T-cell (primary cell): ENCODE measurements at regions of chr11 and their contacts with region 1.

Region 1: GRCh38 chr11:104637657-104638170 is 260.5 kb downstream of the CASP12 start:
- DNase-seq: no peak
- ATAC-seq: no peak
- H3K4me3 ChIP-seq: no peak overlapping the region
- H3K4me3 Mint-ChIP-seq: no peak overlapping the region
- H3K27ac ChIP-seq: no peak overlapping the region
- H3K27ac Mint-ChIP-seq: no peak overlapping the region
- H3K4me1 ChIP-seq: no peaks in the 10 kb centered on the region
- H3K4me1 Mint-ChIP-seq: peaks cover 0 to 2% (median 0%) of the 10 kb centered on the region in 3 donors
- H3K27me3 ChIP-seq: no peaks in the 10 kb centered on the region
- H3K27me3 Mint-ChIP-seq: no peaks in the 10 kb centered on the region

Region 2: DNA sequence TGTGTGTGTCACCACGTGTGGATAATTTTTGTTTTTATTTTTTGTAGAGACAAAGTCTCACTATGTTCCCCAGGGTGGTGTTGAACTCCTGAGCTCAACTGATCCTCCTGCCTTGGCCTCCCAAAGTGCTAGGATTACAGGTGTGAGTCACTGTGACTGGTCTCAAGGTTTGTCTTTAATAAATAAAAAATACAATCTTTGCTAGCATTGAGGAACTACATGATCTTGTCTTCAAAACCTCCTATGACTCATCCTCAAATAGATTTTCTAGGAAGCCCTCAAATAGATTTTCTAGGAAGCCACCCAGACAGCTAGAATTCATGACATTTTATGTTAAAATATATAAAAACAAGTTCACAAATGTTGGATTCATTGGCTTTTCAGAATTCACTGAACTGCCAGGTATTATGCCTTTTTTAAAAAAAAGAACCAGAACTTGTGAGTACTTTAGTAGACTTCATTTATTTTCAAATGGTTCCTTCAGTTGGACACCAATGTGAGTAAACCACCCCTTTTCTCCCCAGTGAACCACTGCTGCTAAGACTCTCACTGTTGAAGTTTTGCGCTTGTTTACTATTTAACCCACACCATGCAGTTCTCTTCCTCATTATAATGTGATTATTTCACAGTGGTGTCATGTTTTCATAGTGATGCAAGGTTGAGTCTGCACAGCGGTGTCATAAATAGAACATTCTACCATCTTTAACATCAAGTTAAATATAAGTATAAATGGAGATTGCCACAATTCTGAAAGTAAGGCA is 43.3 kb before region 1 on chr11:
- CTCF ChIA-PET with region 1: no interaction called
- POLR2A ChIA-PET with region 1: no interaction called
- DNase-seq: no peak
- ATAC-seq: peak in 1 of 4 experiments; percentile 35
- H3K4me3 ChIP-seq: no peak overlapping the region
- H3K4me3 Mint-ChIP-seq: no peak overlapping the region
- H3K27ac ChIP-seq: no peak overlapping the region
- H3K27ac Mint-ChIP-seq: peak overlapping the region in 1 of 2 donors; percentile 60
- H3K4me1 ChIP-seq: no peaks in the 10 kb centered on the region
- H3K4me1 Mint-ChIP-seq: peaks cover 0 to 5% (median 4%) of the 10 kb centered on the region in 3 donors
- H3K27me3 ChIP-seq: peaks cover 0 to 2% of the 10 kb centered on the region in 2 experiments
- H3K27me3 Mint-ChIP-seq: peaks cover 0 to 2% of the 10 kb centered on the region in 2 donors

Region 3: DNA sequence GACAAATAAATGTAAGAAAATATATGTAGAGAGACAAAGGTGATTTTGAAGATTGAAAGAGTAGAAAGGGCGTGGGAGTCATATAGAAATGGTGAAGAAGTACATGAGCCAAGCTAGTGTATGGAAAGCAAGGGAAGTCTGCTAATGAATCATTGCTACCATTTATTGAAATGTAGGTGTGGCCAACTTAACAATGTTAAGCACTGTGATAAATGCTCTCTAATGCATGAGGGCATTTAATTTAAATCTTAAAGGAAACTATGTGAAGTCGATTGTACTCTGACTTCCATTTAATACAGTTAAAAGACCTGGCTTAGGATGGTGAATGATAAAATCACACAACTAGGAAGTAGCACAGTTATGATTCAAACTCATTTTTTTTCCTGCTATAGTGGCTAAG is 40.7 kb after region 1 on chr11:
- CTCF ChIA-PET with region 1: no interaction called
- POLR2A ChIA-PET with region 1: no interaction called
- DNase-seq: no peak
- ATAC-seq: no peak
- H3K4me3 ChIP-seq: no peak overlapping the region
- H3K4me3 Mint-ChIP-seq: no peak overlapping the region
- H3K27ac ChIP-seq: no peak overlapping the region
- H3K27ac Mint-ChIP-seq: peak overlapping the region in 1 of 2 donors; percentile 45
- H3K4me1 ChIP-seq: no peaks in the 10 kb centered on the region
- H3K4me1 Mint-ChIP-seq: peaks cover 4 to 7% (median 5%) of the 10 kb centered on the region in 3 donors
- H3K27me3 ChIP-seq: no peaks in the 10 kb centered on the region
- H3K27me3 Mint-ChIP-seq: no peaks in the 10 kb centered on the region

Region 4: GRCh38 chr11:104843150-104843836 is 205.6 kb after region 1 on chr11:
- CTCF ChIA-PET with region 1: interaction called in 1 of 2 experiments, 10 read pairs
- POLR2A ChIA-PET with region 1: no interaction called
- DNase-seq: no peak
- ATAC-seq: no peak
- H3K4me3 ChIP-seq: no peak overlapping the region
- H3K4me3 Mint-ChIP-seq: no peak overlapping the region
- H3K27ac ChIP-seq: no peak overlapping the region
- H3K27ac Mint-ChIP-seq: no peak overlapping the region
- H3K4me1 ChIP-seq: no peaks in the 10 kb centered on the region
- H3K4me1 Mint-ChIP-seq: peaks cover 0 to 7% (median 0%) of the 10 kb centered on the region in 3 donors
- H3K27me3 ChIP-seq: no peaks in the 10 kb centered on the region
- H3K27me3 Mint-ChIP-seq: no peaks in the 10 kb centered on the region